Psoas muscle (tissue), 8 donors: ENCODE measurements at regions of chr15 and their contacts with region 1.

Region 1: DNA sequence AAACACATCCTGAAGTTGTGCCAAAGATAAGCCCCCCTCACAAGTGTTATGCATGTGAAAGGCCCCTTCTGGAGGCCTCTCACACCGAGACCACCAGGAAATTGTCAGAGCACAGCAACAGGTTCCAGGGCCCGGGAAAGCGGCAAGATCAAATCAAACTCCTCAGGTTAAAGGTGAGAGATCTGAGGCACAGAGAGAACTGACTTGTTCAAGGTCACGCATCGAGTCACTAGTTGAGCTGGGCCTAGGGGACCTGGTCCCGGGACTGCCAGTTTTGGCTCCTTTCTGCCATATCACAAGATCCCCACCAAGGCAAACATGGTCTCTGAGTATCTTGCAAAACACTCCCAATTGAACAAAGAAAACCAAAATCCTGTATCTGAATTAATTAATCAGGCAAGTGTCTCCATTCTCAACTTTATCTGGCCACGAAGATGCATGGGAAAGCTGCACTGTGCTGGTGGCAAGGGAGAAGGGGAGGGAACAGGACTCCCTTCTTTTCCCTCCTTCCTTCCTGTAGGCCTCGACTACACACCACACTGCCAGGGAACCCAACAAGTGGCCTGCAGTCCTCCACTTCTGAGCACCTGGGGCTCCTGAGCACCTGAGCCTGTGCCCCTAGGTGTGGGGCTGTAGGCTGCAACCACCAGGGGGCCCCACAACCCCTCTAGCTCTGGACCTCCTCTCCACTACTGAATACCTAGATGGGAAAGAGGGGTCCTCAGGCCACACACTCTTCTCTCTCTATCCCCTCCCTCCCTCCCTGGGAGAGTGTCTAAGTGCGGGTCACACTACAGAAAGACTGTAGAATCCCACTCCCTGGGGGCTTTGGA is 37.3 kb downstream of the ANP32A start:
- DNase-seq: peak in 1 of 2 donors; percentile 51
- ATAC-seq: peak; percentile 71 to 87 (median 82)
- H3K4me3 ChIP-seq: no peak overlapping the region
- H3K27ac ChIP-seq: no peak overlapping the region
- H3K4me1 ChIP-seq: peaks cover 4% of the 10 kb centered on the region
- H3K27me3 ChIP-seq: no peaks in the 10 kb centered on the region
- CTCF ChIP-seq: peak; percentile 72

Region 2: GRCh38 chr15:68559345-68560310 is 223.8 kb before region 1 on chr15:
- intact Hi-C with region 1: loop called in 1 of 2 experiments (anchors 5 kb)
- DNase-seq: peak; percentile 79 to 90
- ATAC-seq: peak; percentile 92 to 98 (median 94)
- H3K4me3 ChIP-seq: peak overlapping the region; percentile 58
- H3K27ac ChIP-seq: no peak overlapping the region
- H3K4me1 ChIP-seq: no peaks in the 10 kb centered on the region
- H3K27me3 ChIP-seq: no peaks in the 10 kb centered on the region
- CTCF ChIP-seq: peak; percentile 95

Region 3: GRCh38 chr15:68572921-68573320 is 210.5 kb before region 1 on chr15:
- intact Hi-C with region 1: no loop called
- DNase-seq: peak in 1 of 2 donors; percentile 19
- ATAC-seq: no peak
- H3K4me3 ChIP-seq: no peak overlapping the region
- H3K27ac ChIP-seq: no peak overlapping the region
- H3K4me1 ChIP-seq: peaks cover 3% of the 10 kb centered on the region
- H3K27me3 ChIP-seq: peaks cover 0 to 38% (median 3%) of the 10 kb centered on the region in 3 donors
- CTCF ChIP-seq: no peak

Region 4: DNA sequence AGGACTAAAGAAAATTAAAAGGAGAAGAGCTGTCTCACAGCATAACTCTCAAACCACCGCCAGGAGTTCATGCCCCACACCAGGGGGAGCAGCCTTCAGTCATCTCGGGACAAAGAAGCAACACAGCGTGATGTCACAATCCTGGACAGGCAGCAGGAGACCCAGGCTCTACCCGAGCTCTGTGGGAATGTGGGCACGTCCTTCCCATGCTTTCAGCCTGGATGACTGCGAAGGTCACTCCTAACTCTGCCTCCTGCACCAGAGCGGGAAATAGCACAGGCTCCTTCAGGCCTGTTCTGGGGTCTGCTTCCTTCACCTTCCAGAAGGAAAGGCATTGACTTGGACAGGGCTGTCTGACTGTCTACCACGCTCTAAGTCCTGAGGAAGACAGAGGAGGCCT is 262.4 kb after region 1 on chr15:
- intact Hi-C with region 1: no loop called
- DNase-seq: no peak
- ATAC-seq: no peak
- H3K4me3 ChIP-seq: no peak overlapping the region
- H3K27ac ChIP-seq: no peak overlapping the region
- H3K4me1 ChIP-seq: no peaks in the 10 kb centered on the region
- H3K27me3 ChIP-seq: no peaks in the 10 kb centered on the region
- CTCF ChIP-seq: no peak